Activated CD4-positive, alpha-beta T cell treated with anti-CD3 and anti-CD28 coated beads, Interleukin-2, amount 10 ng/mL, durations not matched to agents 7 days and 5 days (primary cell): ENCODE measurements at regions of chr1 and their contacts with region 1.

Region 1: GRCh38 chr1:225447650-225448089 is 19.8 kb upstream of the LBR start:
- DNase-seq: no peak
- H3K4me3 Mint-ChIP-seq: no peak overlapping the region
- H3K27ac Mint-ChIP-seq: peak overlapping the region; percentile 7
- H3K4me1 Mint-ChIP-seq: peaks cover 61% of the 10 kb centered on the region
- H3K27me3 Mint-ChIP-seq: no peaks in the 10 kb centered on the region

Region 2: DNA sequence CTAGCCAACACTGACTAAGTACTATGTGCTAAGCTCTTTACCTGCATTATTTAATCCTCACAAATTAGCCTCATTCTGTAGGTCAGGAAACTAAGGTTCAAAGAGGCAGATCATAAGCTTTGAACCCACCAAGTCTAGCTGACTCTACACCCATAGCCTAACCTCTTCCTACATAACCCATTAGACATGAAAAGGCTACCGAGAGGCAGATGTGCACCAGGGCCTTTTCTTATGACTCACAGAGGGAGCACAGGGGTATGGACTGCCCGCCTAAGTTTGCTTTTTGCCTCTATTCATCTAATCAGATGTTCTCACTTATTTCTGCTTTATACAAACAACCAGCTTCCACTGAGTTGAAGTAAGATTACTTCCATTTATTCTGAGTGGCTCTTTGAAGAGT is 51.3 kb before region 1 on chr1:
- CTCF ChIA-PET with region 1: no interaction called
- POLR2A ChIA-PET with region 1: no interaction called
- DNase-seq: no peak
- H3K4me3 Mint-ChIP-seq: no peak overlapping the region
- H3K27ac Mint-ChIP-seq: peak overlapping the region; percentile 31
- H3K4me1 Mint-ChIP-seq: peaks cover 8% of the 10 kb centered on the region
- H3K27me3 Mint-ChIP-seq: no peaks in the 10 kb centered on the region

Region 3: DNA sequence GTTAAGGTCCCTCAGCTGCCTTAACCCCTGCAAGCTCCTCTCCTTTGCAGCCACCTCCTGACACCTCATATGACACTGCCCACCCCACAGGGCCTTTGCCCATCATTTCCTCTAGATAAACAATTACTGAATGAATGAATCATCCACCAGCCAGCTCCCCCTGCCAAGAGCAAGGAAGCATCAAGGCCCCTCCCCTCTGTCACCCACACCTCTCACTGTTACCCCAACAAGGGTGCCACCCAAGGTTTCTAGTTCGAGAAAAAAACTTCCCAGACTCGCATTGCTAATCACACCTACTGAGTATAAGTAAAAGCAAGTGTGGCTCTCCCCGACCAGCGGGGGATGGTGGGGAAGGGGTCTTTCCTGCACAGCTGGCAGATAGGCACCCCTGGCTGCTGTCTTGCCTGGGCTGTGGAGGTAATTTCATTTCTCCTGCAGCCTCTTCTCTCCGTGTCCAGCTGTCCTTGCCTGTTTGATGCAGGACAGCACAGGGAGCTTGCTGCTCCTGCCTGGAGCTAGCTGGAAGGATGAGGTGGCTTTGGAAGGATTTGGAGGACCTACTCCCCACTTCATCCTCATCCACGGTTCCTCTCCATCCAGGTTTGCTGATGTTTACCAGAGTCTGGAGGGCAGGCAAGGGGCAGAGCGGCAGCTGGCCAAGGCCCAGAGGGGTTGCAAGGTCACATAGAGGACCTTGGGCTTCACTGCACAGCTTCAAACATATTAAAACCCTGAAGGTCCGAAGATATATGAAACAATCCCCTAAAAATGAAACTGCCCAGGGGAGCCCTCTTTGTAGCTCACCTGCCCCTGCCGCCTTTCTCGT is 13.3 kb after region 1 on chr1:
- CTCF ChIA-PET with region 1: interaction called, 24 read pairs
- POLR2A ChIA-PET with region 1: no interaction called
- DNase-seq: peak; percentile 48
- H3K4me3 Mint-ChIP-seq: no peak overlapping the region
- H3K27ac Mint-ChIP-seq: peak overlapping the region; percentile 61
- H3K4me1 Mint-ChIP-seq: peaks cover 65% of the 10 kb centered on the region
- H3K27me3 Mint-ChIP-seq: no peaks in the 10 kb centered on the region